ENCODE measurements at regions of chr2 and their contacts with region 1.

Region 1: GRCh38 chr2:219560037-219560892 is 11.1 kb downstream of the OBSL1 start:
- DNase-seq: peak in 4 of 5 donors; percentile 19 to 37 (median 28)
- H3K4me3 ChIP-seq: no peak overlapping the region
- H3K4me3 Mint-ChIP-seq: no peak overlapping the region
- H3K27ac ChIP-seq: no peak overlapping the region
- H3K27ac Mint-ChIP-seq: no peak overlapping the region
- H3K4me1 ChIP-seq: no peaks in the 10 kb centered on the region
- H3K4me1 Mint-ChIP-seq: peaks cover 0 to 2% (median 0%) of the 10 kb centered on the region in 4 donors
- H3K27me3 ChIP-seq: no peaks in the 10 kb centered on the region
- H3K27me3 Mint-ChIP-seq: peaks cover 10 to 22% of the 10 kb centered on the region in 2 donors

Region 2: DNA sequence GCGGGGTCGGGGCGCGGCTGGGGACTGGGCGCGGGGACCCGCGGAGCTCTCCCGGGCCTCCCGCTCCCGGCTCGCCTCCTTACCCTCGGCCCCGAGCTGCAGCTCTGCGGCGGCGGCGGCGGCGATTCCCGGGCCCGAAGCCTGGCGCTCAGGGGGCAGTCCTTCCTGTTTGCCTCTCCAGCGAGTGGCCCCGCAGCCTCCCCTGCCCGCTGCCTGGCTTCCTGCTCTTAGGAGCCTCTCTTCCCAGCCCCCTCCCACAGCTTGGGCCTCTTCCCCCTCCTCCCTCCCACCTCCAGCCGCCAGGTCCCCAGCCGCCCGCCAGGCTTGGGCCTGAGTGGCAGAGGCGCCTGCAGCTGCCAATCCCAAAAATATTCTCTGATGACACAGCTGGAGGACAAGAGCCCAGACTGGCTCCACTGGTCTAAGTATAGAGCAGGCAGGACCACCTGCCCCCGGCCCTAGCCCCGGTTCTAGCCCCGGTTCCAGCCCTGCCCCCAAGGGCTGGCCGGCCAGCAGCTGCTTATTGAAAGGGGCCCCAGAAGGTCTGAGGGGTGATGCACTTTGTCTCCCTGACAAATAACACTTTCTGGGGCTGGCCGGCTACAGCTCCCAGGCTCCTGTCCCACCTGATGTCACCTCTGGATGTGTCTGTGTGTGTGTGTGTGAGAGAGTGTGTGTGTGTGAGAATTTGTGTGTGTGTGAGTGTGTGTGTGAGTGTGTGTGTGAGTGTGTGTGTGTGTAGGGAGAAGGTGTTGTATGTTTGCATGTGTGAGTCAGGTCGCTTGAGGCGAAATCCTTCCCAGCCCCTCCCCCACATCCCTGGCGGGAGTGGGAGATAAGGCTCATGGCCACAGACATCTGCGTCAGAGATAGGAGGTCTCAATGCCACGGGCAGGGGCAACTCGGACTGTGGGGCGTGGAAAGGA is 11.3 kb after region 1 on chr2 and contains the start of gene OBSL1:
- CTCF ChIA-PET with region 1: interaction called, 19 read pairs
- POLR2A ChIA-PET with region 1: no interaction called
- intact Hi-C with region 1: no loop called
- DNase-seq: no peak
- H3K4me3 ChIP-seq: peak within 1 kb of the TSS in 1 of 2 donors; percentile 9
- H3K4me3 Mint-ChIP-seq: peak within 1 kb of the TSS in 6 of 8 donors; percentile 1 to 68 (median 24)
- H3K27ac ChIP-seq: no peak within 1 kb of the TSS
- H3K27ac Mint-ChIP-seq: no peak within 1 kb of the TSS
- H3K4me1 ChIP-seq: peaks cover 3% of the 10 kb centered on the region
- H3K4me1 Mint-ChIP-seq: peaks cover 0 to 3% (median 0%) of the 10 kb centered on the region in 4 donors
- H3K27me3 ChIP-seq: peaks cover 15% of the 10 kb centered on the region
- H3K27me3 Mint-ChIP-seq: peaks cover 27 to 45% of the 10 kb centered on the region in 2 donors
- total RNA-seq, gene OBSL1: 0.09 TPM in 1 of 2 experiments, not detected in the other

Region 3: DNA sequence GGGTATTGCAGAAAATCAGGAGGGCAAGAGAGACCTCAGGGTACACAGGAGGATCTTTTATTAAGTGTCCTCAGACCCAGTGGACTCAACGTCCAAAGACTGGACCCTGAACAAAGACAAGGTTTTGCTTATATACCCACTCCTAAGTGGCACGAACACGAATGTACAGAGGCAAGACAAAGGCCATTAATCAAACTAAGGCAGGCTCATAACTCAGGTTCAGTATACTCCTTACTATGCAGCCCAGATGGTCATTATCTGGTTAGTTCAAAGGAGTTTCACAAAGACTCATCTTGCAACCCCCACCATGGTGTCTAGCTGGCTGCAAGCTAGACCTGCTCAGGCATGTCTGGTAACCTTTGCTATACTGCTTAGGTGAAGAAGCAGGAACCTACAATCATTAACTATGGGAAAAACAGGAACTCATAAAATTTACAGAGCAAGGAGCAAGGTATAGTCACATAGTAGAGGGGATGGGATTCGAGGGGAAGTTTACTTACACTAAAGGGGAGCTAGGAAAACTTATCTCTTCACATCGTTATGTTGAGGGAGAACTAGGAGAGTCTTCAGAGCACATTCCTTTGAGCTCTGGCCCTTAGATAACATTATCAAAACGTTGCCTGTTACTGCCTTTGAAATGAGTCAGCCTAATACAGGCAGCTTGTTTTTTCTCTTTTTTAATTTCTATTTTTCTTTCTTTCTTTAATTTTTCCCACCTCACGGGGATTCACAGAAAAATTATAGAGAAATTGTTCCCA is 101.1 kb after region 1 on chr2:
- CTCF ChIA-PET with region 1: no interaction called
- POLR2A ChIA-PET with region 1: no interaction called
- intact Hi-C with region 1: no loop called
- DNase-seq: no peak
- H3K4me3 ChIP-seq: no peak overlapping the region
- H3K4me3 Mint-ChIP-seq: no peak overlapping the region
- H3K27ac ChIP-seq: no peak overlapping the region
- H3K27ac Mint-ChIP-seq: no peak overlapping the region
- H3K4me1 ChIP-seq: no peaks in the 10 kb centered on the region
- H3K4me1 Mint-ChIP-seq: no peaks in the 10 kb centered on the region
- H3K27me3 ChIP-seq: no peaks in the 10 kb centered on the region
- H3K27me3 Mint-ChIP-seq: peaks cover 14 to 27% of the 10 kb centered on the region in 2 donors